Activated CD4-positive, alpha-beta T cell treated with anti-CD3 and anti-CD28 coated beads for 36 hours (primary cell): ENCODE measurements at regions of chr5 and their contacts with region 1.

Region 1: GRCh38 chr5:66987949-66988838 is 208.4 kb downstream of the CD180 start:
- DNase-seq: no peak
- ATAC-seq: peak; percentile 69
- H3K4me3 Mint-ChIP-seq: no peak overlapping the region
- H3K27ac Mint-ChIP-seq: no peak overlapping the region
- H3K4me1 Mint-ChIP-seq: peaks cover 2% of the 10 kb centered on the region
- H3K27me3 Mint-ChIP-seq: no peaks in the 10 kb centered on the region

Region 2: GRCh38 chr5:67085616-67086015 is 97.4 kb after region 1 on chr5:
- CTCF ChIA-PET with region 1: interaction called, 11 read pairs
- POLR2A ChIA-PET with region 1: no interaction called
- intact Hi-C with region 1: no loop called
- DNase-seq: no peak
- ATAC-seq: peak; percentile 49
- H3K4me3 Mint-ChIP-seq: no peak overlapping the region
- H3K27ac Mint-ChIP-seq: no peak overlapping the region
- H3K4me1 Mint-ChIP-seq: peaks cover 16% of the 10 kb centered on the region
- H3K27me3 Mint-ChIP-seq: no peaks in the 10 kb centered on the region

Region 3: GRCh38 chr5:67149951-67150523 is 161.8 kb after region 1 on chr5:
- CTCF ChIA-PET with region 1: interaction called, 3 read pairs
- POLR2A ChIA-PET with region 1: no interaction called
- intact Hi-C with region 1: loop called in 1 of 2 experiments (anchors 5 kb)
- DNase-seq: no peak
- ATAC-seq: no peak
- H3K4me3 Mint-ChIP-seq: no peak overlapping the region
- H3K27ac Mint-ChIP-seq: no peak overlapping the region
- H3K4me1 Mint-ChIP-seq: no peaks in the 10 kb centered on the region
- H3K27me3 Mint-ChIP-seq: no peaks in the 10 kb centered on the region